Activated T-helper 1 cell treated with anti-CD3 and anti-CD28 coated beads, Interleukin-12 subunit alpha, Interleukin-12 subunit beta, Interleukin-2, Interleukin-4 antibody, amounts not matched to agents 30 ng/mL and 10 ng/mL and 1 ng/mL, durations not matched to agents 14 hours and 24 hours and 36 hours (primary cell): ENCODE measurements at regions of chr2 and their contacts with region 1.

Region 1: GRCh38 chr2:153519257-153519875 is 40.8 kb upstream of the RPRM start:
- DNase-seq: peak; percentile 5
- H3K4me3 Mint-ChIP-seq: no peak overlapping the region
- H3K27ac Mint-ChIP-seq: no peak overlapping the region
- H3K4me1 Mint-ChIP-seq: no peaks in the 10 kb centered on the region
- H3K27me3 Mint-ChIP-seq: no peaks in the 10 kb centered on the region

Region 2: DNA sequence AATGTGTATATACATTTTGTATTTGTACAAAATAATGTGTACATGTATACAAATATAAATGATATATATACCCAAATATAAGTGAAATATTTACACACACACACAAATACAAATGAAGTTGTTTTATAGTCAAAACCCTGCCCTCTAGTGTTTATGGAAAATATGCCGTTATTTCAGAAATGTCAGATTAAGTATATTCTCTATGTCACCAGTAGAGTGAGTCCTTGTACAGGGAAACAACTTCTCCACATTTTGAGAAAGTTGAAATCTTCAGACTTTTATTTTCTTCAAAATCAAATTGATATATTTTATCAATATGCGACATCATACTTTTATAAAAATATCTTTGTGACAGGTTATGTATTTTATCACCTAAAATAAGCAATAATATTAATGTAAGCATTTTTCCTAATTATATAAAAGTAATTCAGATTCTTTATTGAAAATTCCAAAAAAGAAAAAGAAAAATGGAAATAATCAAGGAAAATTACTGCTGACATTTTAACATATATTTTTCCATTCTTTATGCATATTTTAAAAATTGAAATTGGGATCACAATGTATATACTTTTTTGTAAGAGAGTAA is 778.5 kb before region 1 on chr2:
- intact Hi-C with region 1: loop called (anchors 1 kb)
- DNase-seq: no peak
- H3K4me3 Mint-ChIP-seq: no peak overlapping the region
- H3K27ac Mint-ChIP-seq: no peak overlapping the region
- H3K4me1 Mint-ChIP-seq: no peaks in the 10 kb centered on the region
- H3K27me3 Mint-ChIP-seq: peaks cover 1% of the 10 kb centered on the region

Region 3: DNA sequence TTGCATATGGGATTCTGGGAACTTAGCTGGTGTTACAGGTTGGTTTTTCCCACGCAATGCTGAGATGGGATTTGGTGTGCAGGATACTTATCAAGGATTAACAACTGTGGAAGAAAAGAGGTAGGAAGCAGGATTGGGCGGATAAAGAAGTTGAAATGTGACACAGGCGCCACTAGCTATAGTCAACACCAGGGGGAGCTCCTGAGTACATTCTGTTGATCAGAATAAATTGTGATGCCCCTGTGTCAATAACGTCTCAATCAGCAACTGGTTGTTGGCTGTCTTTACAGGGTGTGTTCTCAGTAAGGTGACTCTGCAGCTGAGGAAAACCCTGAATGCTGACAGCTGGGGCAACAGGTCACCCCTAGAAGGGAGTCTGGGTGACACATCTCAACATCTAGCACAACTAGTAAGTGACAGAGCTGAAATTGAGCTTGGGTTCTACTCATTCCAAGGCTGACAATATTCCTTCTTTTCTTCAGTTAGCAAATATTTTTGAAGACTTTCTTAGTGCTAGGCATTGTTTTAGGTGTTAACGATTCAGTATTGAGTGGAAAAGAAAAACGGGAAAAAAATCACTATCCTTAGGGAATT is 657.9 kb before region 1 on chr2:
- intact Hi-C with region 1: loop called (anchors 2 kb)
- DNase-seq: no peak
- H3K4me3 Mint-ChIP-seq: no peak overlapping the region
- H3K27ac Mint-ChIP-seq: no peak overlapping the region
- H3K4me1 Mint-ChIP-seq: no peaks in the 10 kb centered on the region
- H3K27me3 Mint-ChIP-seq: no peaks in the 10 kb centered on the region

Region 4: GRCh38 chr2:152925547-152926327 is 593.6 kb before region 1 on chr2:
- intact Hi-C with region 1: loop called (anchors 1 kb)
- DNase-seq: peak; percentile 8
- H3K4me3 Mint-ChIP-seq: no peak overlapping the region
- H3K27ac Mint-ChIP-seq: no peak overlapping the region
- H3K4me1 Mint-ChIP-seq: no peaks in the 10 kb centered on the region
- H3K27me3 Mint-ChIP-seq: no peaks in the 10 kb centered on the region

Region 5: DNA sequence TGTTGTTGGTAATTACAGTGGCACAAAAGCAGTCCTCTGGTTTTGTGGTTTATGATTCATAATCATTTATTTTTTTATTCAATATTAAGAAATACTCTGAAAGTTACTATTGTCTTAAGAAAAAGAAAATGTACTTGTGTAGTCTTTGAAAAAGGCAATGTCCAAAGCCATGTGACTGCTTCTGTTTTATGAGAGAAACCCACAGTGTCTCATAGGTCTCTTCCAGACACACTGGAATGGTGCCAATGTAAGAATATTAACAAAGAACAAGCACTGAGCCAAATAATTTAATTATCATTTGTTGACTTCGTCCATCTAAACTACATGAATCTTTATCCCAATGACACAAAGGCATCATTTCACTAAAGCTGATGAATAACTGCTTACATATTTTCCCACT is 103.3 kb before region 1 on chr2:
- intact Hi-C with region 1: no loop called
- DNase-seq: no peak
- H3K4me3 Mint-ChIP-seq: no peak overlapping the region
- H3K27ac Mint-ChIP-seq: no peak overlapping the region
- H3K4me1 Mint-ChIP-seq: no peaks in the 10 kb centered on the region
- H3K27me3 Mint-ChIP-seq: no peaks in the 10 kb centered on the region